Activated T-helper 1 cell treated with anti-CD3 and anti-CD28 coated beads, Interleukin-12 subunit alpha, Interleukin-12 subunit beta, Interleukin-2, Interleukin-4 antibody, amounts not matched to agents 30 ng/mL and 10 ng/mL and 1 ng/mL, durations not matched to agents 14 hours and 24 hours and 36 hours (primary cell): ENCODE measurements at regions of chr3 and their contacts with region 1.

Region 1: GRCh38 chr3:60010781-60011180 is 961.0 kb upstream of the CFAP20DC start:
- DNase-seq: peak; percentile 73
- H3K4me3 Mint-ChIP-seq: peak overlapping the region; percentile 74
- H3K27ac Mint-ChIP-seq: peak overlapping the region; percentile 91
- H3K4me1 Mint-ChIP-seq: peaks cover 76% of the 10 kb centered on the region
- H3K27me3 Mint-ChIP-seq: peaks cover 2% of the 10 kb centered on the region

Region 2: GRCh38 chr3:59866076-59866475 is 144.7 kb before region 1 on chr3:
- intact Hi-C with region 1: loop called (anchors 2 kb)
- DNase-seq: no peak
- H3K4me3 Mint-ChIP-seq: no peak overlapping the region
- H3K27ac Mint-ChIP-seq: no peak overlapping the region
- H3K4me1 Mint-ChIP-seq: peaks cover 40% of the 10 kb centered on the region
- H3K27me3 Mint-ChIP-seq: no peaks in the 10 kb centered on the region

Region 3: GRCh38 chr3:59994732-59995304 is 16.0 kb before region 1 on chr3:
- intact Hi-C with region 1: loop called (anchors 2 kb)
- DNase-seq: no peak
- H3K4me3 Mint-ChIP-seq: no peak overlapping the region
- H3K27ac Mint-ChIP-seq: no peak overlapping the region
- H3K4me1 Mint-ChIP-seq: peaks cover 54% of the 10 kb centered on the region
- H3K27me3 Mint-ChIP-seq: no peaks in the 10 kb centered on the region

Region 4: GRCh38 chr3:60365360-60365759 is 354.6 kb after region 1 on chr3:
- intact Hi-C with region 1: loop called (anchors 1 kb)
- DNase-seq: no peak
- H3K4me3 Mint-ChIP-seq: no peak overlapping the region
- H3K27ac Mint-ChIP-seq: peak overlapping the region; percentile 46
- H3K4me1 Mint-ChIP-seq: peaks cover 27% of the 10 kb centered on the region
- H3K27me3 Mint-ChIP-seq: no peaks in the 10 kb centered on the region